H1 (cell line): ENCODE measurements at regions of chr17 and their contacts with region 1.

Region 1: DNA sequence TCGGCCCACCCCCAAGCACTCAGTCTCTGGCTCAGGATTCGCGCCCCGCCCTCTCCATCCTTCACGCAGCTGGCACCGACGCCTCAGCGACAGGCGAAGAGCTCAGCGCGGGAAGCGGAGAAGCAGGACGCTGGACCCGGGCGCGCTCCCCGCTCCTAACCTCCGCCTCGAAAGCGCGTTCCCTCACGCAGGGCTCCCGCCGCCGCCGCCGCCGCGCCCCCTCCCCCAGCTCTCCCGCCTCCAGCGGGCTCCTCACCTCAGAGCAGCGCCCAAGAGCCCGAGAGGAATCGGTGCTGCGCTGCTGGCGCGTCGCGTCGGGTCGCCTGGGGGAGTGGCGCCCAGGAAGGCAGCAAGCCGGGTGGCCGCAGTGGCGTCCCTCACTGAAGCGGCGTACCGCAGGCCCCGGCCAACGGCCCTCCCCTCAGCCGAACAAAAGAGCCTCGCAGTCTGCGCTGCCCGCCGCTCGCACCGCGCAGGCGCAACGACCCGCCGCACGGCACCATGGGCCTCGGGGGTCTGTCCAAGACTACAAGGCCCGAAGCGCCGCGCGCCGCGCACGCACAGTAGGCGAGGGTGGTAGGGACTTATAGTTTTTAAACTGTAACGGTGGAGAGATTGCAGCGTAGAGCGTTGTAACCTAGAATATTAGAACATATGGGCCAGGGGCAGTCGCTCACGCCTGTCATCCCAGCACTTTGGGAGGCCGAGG is at the start of gene CBX1:
- DNase-seq: peak; percentile 92 to 95
- H3K4me3 ChIP-seq: peak within 1 kb of the TSS; percentile 74 to 94 (median 87)
- H3K27ac ChIP-seq: peak within 1 kb of the TSS; percentile 72; the same call in 1 of the 2 replicates
- H3K4me1 ChIP-seq: peaks cover 0 to 3% (median 0%) of the 10 kb centered on the region in 4 experiments; a peak in 1 of 7 replicates
- H3K27me3 ChIP-seq: no peaks in the 10 kb centered on the region
- CTCF ChIP-seq: 0 out of 4 replicates have a peak, but pooled peaks of 1 of the 3 experiments have one; percentile 3
- EP300 ChIP-seq: 0 out of 3 replicates have a peak, but pooled peaks of 1 of the 2 experiments have one; percentile 19
- POLR2A ChIP-seq: peak in 1 of 2 experiments; percentile 43; a peak in 2 of 3 replicates
- RAD21 ChIP-seq: no peak
- total RNA-seq, gene CBX1: 166 and 173 TPM in 2 replicates

Region 2: DNA sequence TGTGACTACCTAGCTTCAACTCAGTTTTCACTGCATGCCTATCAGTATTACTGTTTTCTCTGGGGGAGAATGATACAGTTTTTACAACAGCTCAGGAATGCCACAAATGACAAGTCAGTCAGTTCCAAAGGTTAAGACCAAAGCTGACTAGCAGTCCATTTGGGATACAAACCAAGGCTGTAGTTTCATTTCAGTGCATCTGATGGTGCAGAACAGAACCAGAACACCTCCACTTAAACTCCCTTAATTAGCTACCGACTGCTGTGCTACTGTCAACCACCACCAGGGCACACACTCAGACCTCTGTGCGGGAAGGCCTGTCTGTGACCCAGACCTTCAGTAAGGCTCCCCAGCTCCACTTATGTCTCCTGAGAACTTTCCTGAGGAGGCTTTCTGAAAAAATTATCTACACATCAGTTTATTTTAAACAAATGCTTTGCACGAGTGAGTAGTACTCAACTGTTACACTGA is 32.6 kb before region 1 on chr17:
- CTCF ChIA-PET with region 1: interaction called, 18 read pairs
- POLR2A ChIA-PET with region 1: interaction called, 14 read pairs
- DNase-seq: peak in 1 of 2 experiments; percentile 62
- H3K4me3 ChIP-seq: no peak overlapping the region
- H3K27ac ChIP-seq: no peak overlapping the region
- H3K4me1 ChIP-seq: peaks cover 0 to 2% (median 0%) of the 10 kb centered on the region in 4 experiments; a peak in 1 of 7 replicates
- H3K27me3 ChIP-seq: no peaks in the 10 kb centered on the region
- CTCF ChIP-seq: peak; percentile 60 to 74 (median 69)
- EP300 ChIP-seq: no peak
- POLR2A ChIP-seq: no peak
- RAD21 ChIP-seq: peak; percentile 39 to 51

Region 3: DNA sequence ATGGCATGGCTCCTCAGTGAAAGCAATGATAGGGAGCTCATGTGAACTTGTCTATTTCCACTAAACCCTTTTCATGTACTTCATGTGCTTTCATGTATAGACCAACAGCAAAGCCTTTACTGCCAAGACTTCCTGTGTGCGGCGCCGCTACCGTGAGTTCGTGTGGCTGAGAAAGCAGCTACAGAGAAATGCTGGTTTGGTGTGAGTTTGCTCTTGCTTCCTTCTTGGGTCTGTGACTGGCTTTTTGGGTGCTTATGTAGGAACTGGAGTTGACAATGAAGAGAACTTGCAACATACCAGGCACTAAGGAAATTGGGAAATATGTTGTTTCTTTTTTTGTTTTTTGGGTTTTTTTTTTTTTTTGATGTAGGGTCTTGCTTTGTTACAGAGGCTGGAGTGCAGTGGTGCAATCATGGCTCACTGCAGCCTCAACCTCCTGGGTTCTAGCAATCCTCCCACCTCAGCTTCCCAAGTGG is 12.1 kb after region 1 on chr17:
- CTCF ChIA-PET with region 1: interaction called, 26 read pairs
- POLR2A ChIA-PET with region 1: interaction called, 13 read pairs
- DNase-seq: no peak
- H3K4me3 ChIP-seq: no peak overlapping the region
- H3K27ac ChIP-seq: no peak overlapping the region
- H3K4me1 ChIP-seq: no peaks in the 10 kb centered on the region
- H3K27me3 ChIP-seq: no peaks in the 10 kb centered on the region
- CTCF ChIP-seq: no peak
- EP300 ChIP-seq: no peak
- POLR2A ChIP-seq: no peak
- RAD21 ChIP-seq: no peak

Region 4: GRCh38 chr17:48123111-48123510 is 21.9 kb after region 1 on chr17:
- CTCF ChIA-PET with region 1: interaction called, 18 read pairs
- POLR2A ChIA-PET with region 1: interaction called, 5 read pairs
- DNase-seq: no peak
- H3K4me3 ChIP-seq: no peak overlapping the region
- H3K27ac ChIP-seq: no peak overlapping the region
- H3K4me1 ChIP-seq: no peaks in the 10 kb centered on the region
- H3K27me3 ChIP-seq: no peaks in the 10 kb centered on the region
- CTCF ChIP-seq: no peak
- EP300 ChIP-seq: no peak
- POLR2A ChIP-seq: no peak
- RAD21 ChIP-seq: no peak

Region 5: GRCh38 chr17:48175692-48176470 is 74.7 kb after region 1 on chr17:
- CTCF ChIA-PET with region 1: no interaction called
- POLR2A ChIA-PET with region 1: no interaction called
- DNase-seq: no peak
- H3K4me3 ChIP-seq: no peak overlapping the region
- H3K27ac ChIP-seq: no peak overlapping the region
- H3K4me1 ChIP-seq: peaks cover 0 to 5% (median 3%) of the 10 kb centered on the region in 4 experiments; a peak in 3 of 7 replicates
- H3K27me3 ChIP-seq: no peaks in the 10 kb centered on the region
- CTCF ChIP-seq: no peak
- EP300 ChIP-seq: no peak
- POLR2A ChIP-seq: no peak
- RAD21 ChIP-seq: no peak